CD4-positive, alpha-beta T cell (primary cell): ENCODE measurements at regions of chr10 and their contacts with region 1.

Region 1: GRCh38 chr10:84139126-84140035 is at the start of gene GHITM:
- DNase-seq: peak; percentile 98 to 100 (median 99)
- ATAC-seq: peak; percentile 94
- H3K4me3 ChIP-seq: peak within 1 kb of the TSS; percentile 93
- H3K4me3 Mint-ChIP-seq: peak within 1 kb of the TSS; percentile 90
- H3K27ac ChIP-seq: peak within 1 kb of the TSS; percentile 95
- H3K27ac Mint-ChIP-seq: peak within 1 kb of the TSS; percentile 97
- H3K4me1 ChIP-seq: peaks cover 20% of the 10 kb centered on the region
- H3K4me1 Mint-ChIP-seq: peaks cover 30% of the 10 kb centered on the region
- H3K27me3 ChIP-seq: no peaks in the 10 kb centered on the region
- H3K27me3 Mint-ChIP-seq: no peaks in the 10 kb centered on the region
- CTCF ChIP-seq: peak; percentile 36
- total RNA-seq, gene GHITM: 64.7 to 67.9 TPM

Region 2: DNA sequence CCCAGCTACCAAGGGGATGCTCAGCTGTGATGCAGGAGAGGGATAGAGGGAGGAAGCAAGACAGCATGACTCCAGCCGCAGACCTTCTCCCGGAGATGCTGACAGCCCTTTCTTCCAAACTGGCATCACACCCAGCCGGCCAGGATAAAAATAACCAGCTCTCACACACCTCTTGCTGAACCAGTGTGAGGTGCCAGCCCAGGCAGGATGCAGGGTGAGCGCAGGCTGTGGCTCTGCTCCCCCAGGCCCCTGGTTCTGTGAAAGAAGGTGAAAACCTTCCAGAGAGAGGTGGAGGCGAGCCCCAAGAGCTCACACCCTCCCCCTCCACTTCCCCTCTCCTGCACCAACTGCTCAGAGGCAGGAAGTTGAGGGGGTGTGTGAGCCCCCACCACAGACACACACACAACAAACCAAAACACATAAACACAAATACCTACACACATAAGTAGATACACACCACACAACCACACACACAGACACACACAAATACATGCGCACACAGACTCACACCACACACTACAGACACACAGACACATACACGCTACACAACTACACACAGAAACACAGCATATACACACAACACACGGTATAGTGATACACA is 38.3 kb after region 1 on chr10:
- CTCF ChIA-PET with region 1: interaction called, 3 read pairs
- POLR2A ChIA-PET with region 1: interaction called, 18 read pairs
- intact Hi-C with region 1: no loop called
- DNase-seq: peak in 12 of 14 experiments; percentile 10 to 86 (median 43)
- ATAC-seq: peak; percentile 79
- H3K4me3 ChIP-seq: no peak overlapping the region
- H3K4me3 Mint-ChIP-seq: no peak overlapping the region
- H3K27ac ChIP-seq: peak overlapping the region; percentile 5 to 68
- H3K27ac Mint-ChIP-seq: no peak overlapping the region
- H3K4me1 ChIP-seq: peaks cover 33% of the 10 kb centered on the region
- H3K4me1 Mint-ChIP-seq: peaks cover 13% of the 10 kb centered on the region
- H3K27me3 ChIP-seq: no peaks in the 10 kb centered on the region
- H3K27me3 Mint-ChIP-seq: no peaks in the 10 kb centered on the region
- CTCF ChIP-seq: no peak